Left ventricle myocardium inferior (tissue), 1 donor: ENCODE measurements at regions of chr16 and their contacts with region 1.

Region 1: GRCh38 chr16:22195695-22196558 is 10.2 kb upstream of the EEF2K start:
- DNase-seq: peak; percentile 89
- H3K4me3 ChIP-seq: peak overlapping the region; percentile 71
- H3K27ac ChIP-seq: peak overlapping the region; percentile 86
- H3K4me1 ChIP-seq: peaks cover 34% of the 10 kb centered on the region
- H3K27me3 ChIP-seq: no peaks in the 10 kb centered on the region
- CTCF ChIP-seq: peak; percentile 97

Region 2: DNA sequence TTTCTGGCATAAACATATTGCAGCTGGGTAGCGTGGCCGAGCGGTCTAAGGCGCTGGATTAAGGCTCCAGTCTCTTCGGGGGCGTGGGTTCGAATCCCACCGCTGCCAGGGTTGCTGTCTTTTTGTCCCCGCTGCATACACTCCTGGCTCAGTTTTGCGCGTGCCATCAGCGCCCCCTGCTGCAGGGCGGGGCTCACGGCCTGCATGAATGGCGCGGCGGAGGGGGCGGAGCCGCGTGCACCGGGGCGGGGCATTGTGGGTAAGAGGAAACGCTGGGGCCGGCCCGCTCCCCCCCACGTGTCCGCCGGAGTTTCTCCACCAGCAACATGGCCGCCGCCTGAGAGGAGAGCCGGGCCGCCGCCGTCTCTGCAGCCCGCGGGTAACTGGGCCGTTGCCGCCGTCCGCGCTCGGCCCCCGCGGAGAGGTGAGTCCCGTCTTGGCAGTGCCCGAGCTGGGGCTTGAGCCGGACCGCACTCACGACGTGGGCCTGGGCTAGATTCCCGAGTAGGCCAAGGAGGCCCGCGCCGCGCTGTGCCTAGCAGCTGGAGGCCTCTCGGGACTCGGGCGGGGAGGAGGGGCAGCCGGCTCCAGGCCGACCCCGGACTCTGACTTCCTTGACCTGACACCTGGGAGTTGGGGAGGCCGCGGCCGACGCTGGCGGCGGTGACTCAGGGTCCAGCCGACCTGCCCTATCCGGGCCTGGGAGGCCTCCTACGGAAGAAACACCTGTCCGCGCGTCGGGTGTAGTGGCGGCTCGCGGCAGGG is 101.4 kb after region 1 on chr16 and contains the start of gene POLR3E:
- intact Hi-C with region 1: loop called (anchors 5 kb)
- DNase-seq: peak; percentile 99
- H3K4me3 ChIP-seq: peak within 1 kb of the TSS; percentile 95
- H3K27ac ChIP-seq: peak within 1 kb of the TSS; percentile 92
- H3K4me1 ChIP-seq: peaks cover 46% of the 10 kb centered on the region
- H3K27me3 ChIP-seq: no peaks in the 10 kb centered on the region
- CTCF ChIP-seq: peak; percentile 94
- total RNA-seq, gene POLR3E: 38.4 TPM

Region 3: GRCh38 chr16:22325598-22326368 is 129.9 kb after region 1 on chr16:
- intact Hi-C with region 1: no loop called
- DNase-seq: no peak
- H3K4me3 ChIP-seq: no peak overlapping the region
- H3K27ac ChIP-seq: no peak overlapping the region
- H3K4me1 ChIP-seq: peaks cover 19% of the 10 kb centered on the region
- H3K27me3 ChIP-seq: no peaks in the 10 kb centered on the region
- CTCF ChIP-seq: no peak